Lower leg skin (tissue), 4 donors: ENCODE measurements at regions of chr2 and their contacts with region 1.

Region 1: DNA sequence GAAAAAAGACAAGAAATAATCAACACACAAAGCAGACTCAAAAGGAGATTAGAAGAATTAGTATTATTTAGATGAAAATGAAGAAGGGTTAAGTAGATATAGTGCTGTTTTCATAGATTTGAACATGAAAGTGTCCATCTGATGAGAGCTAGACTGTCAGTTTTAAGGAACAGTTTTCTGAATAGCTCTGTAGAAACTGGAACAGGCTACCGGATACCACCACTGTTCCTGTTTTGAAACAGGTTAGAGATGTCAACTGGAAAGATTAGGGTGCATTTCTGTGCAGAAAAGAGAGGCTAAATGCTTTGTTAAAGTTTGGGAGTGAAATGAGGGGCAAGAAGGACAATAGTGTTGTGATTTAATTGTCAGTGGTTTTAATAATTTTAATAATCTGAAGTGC is 908.8 kb downstream of the CNTNAP5 start:
- DNase-seq: no peak
- H3K4me3 ChIP-seq: no peak overlapping the region
- CTCF ChIP-seq: no peak
- POLR2A ChIP-seq: no peak

Region 2: GRCh38 chr2:124740636-124741035 is 193.2 kb before region 1 on chr2:
- intact Hi-C with region 1: no loop called
- DNase-seq: no peak
- H3K4me3 ChIP-seq: no peak overlapping the region
- CTCF ChIP-seq: no peak
- POLR2A ChIP-seq: no peak

Region 3: GRCh38 chr2:126288362-126288761 is 1354.5 kb after region 1 on chr2:
- intact Hi-C with region 1: loop called (anchors 10 kb)
- DNase-seq: no peak
- H3K4me3 ChIP-seq: no peak overlapping the region
- CTCF ChIP-seq: no peak
- POLR2A ChIP-seq: no peak